ENCODE measurements at regions of chr12 and their contacts with region 1.

Region 1: GRCh38 chr12:26884765-26885576 is 52.0 kb upstream of the ITPR2 start:
- DNase-seq: peak; percentile 59 to 89 (median 82)
- ATAC-seq: peak; percentile 99
- H3K4me3 ChIP-seq: peak overlapping the region; percentile 18 to 21
- H3K4me3 Mint-ChIP-seq: peak overlapping the region; percentile 70
- H3K27ac ChIP-seq: no peak overlapping the region
- H3K27ac Mint-ChIP-seq: no peak overlapping the region
- H3K4me1 ChIP-seq: no peaks in the 10 kb centered on the region
- H3K4me1 Mint-ChIP-seq: peaks cover 8% of the 10 kb centered on the region
- H3K27me3 ChIP-seq: no peaks in the 10 kb centered on the region
- H3K27me3 Mint-ChIP-seq: peaks cover 6% of the 10 kb centered on the region
- CTCF ChIP-seq: peak; percentile 98

Region 2: DNA sequence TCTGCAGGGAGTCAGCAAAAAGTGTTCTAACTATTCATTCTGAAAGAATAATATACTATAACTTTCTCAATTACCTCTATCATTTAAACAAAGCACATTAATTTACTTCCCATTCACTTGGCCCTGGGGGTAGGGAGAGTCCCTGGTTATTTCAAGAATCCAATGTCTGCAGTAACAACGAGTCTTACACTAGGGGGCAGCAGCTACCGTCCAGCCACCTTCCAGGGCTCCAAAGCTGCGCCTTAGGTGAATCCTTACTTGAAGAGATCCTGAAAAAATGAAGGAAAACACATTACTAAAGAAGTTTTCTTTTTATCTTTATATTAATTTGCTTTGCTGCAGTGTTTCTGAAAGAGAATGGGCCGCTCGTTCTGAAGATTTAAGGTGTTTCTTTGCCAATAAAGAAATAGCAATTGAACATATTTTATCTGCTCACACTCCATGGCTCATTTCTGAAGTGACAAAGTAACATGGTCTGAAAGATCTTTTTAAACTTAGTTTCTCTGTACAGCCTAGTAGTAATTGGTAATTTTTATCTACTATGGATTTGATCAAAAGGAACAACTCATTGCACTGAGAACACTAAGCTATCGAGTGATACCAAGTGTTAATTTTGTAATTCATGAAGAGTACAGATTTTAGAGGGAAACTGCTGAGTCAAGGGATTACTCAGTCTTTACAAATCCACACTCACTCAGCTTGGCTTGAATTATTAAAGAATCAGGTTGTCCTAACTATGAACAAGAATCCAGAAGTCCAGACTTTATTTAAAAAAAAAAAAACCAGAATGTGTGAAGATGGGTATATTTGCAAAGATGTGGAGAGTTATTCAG is 787.7 kb before region 1 on chr12:
- CTCF ChIA-PET with region 1: no interaction called
- POLR2A ChIA-PET with region 1: no interaction called
- intact Hi-C with region 1: loop called (anchors 1 to 5 kb)
- DNase-seq: peak; percentile 16 to 73 (median 55)
- ATAC-seq: peak; percentile 81
- H3K4me3 ChIP-seq: no peak overlapping the region
- H3K4me3 Mint-ChIP-seq: no peak overlapping the region
- H3K27ac ChIP-seq: no peak overlapping the region
- H3K27ac Mint-ChIP-seq: no peak overlapping the region
- H3K4me1 ChIP-seq: no peaks in the 10 kb centered on the region
- H3K4me1 Mint-ChIP-seq: no peaks in the 10 kb centered on the region
- H3K27me3 ChIP-seq: no peaks in the 10 kb centered on the region
- H3K27me3 Mint-ChIP-seq: peaks cover 7% of the 10 kb centered on the region
- CTCF ChIP-seq: peak; percentile 90

Region 3: GRCh38 chr12:26396402-26396801 is 488.6 kb before region 1 on chr12:
- CTCF ChIA-PET with region 1: no interaction called
- POLR2A ChIA-PET with region 1: no interaction called
- intact Hi-C with region 1: no loop called
- DNase-seq: no peak
- ATAC-seq: no peak
- H3K4me3 ChIP-seq: no peak overlapping the region
- H3K4me3 Mint-ChIP-seq: no peak overlapping the region
- H3K27ac ChIP-seq: no peak overlapping the region
- H3K27ac Mint-ChIP-seq: no peak overlapping the region
- H3K4me1 ChIP-seq: no peaks in the 10 kb centered on the region
- H3K4me1 Mint-ChIP-seq: no peaks in the 10 kb centered on the region
- H3K27me3 ChIP-seq: no peaks in the 10 kb centered on the region
- H3K27me3 Mint-ChIP-seq: no peaks in the 10 kb centered on the region
- CTCF ChIP-seq: no peak

Region 4: GRCh38 chr12:26713885-26714383 is 171.0 kb before region 1 on chr12:
- CTCF ChIA-PET with region 1: no interaction called
- POLR2A ChIA-PET with region 1: no interaction called
- intact Hi-C with region 1: loop called in 1 of 2 experiments (anchors 10 kb)
- DNase-seq: no peak
- ATAC-seq: no peak
- H3K4me3 ChIP-seq: no peak overlapping the region
- H3K4me3 Mint-ChIP-seq: no peak overlapping the region
- H3K27ac ChIP-seq: no peak overlapping the region
- H3K27ac Mint-ChIP-seq: no peak overlapping the region
- H3K4me1 ChIP-seq: no peaks in the 10 kb centered on the region
- H3K4me1 Mint-ChIP-seq: no peaks in the 10 kb centered on the region
- H3K27me3 ChIP-seq: no peaks in the 10 kb centered on the region
- H3K27me3 Mint-ChIP-seq: no peaks in the 10 kb centered on the region
- CTCF ChIP-seq: no peak

Region 5: DNA sequence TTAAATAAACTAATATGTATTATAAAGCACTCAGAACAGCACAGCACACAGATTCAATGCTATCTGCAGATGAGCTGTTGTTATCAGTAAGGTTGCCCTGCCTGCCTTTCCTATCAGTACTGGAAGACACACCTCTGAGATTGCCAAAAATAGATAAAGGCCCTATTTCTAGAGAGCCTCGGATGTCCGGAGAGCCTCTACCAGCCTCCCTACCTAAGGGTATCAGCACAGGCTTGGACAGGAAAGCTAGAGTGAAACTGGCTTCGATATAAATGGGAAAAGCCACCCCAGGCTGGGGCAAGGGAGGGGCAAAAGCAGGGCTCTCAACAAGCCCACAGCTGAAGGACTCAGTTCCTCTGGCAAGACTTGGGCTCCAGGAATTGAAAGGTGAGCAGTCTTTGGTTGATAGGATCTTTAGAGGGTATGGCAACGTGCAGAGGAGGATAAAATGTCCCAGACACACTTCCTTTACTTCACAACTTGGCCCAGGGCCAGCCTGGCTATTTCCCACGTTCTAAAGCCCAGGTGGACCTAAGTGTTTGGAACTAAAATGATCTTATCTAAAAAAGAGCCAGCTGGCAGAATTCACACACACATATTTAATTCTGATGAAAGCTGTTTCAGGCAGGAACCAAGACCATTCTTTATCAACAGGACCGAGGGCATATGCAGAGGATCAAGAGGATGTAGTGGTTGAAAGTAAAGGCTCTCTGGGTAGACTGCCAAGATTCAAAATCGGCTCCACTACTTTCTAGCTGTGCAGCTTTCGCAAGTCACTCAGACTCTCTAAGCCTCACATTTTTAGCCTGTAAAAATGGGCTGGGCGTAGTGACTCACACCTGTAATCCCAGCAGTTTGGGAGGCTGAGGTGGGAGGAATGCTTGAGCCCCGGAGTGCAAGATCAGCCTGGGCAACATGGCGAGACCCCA is 14.2 kb before region 1 on chr12:
- CTCF ChIA-PET with region 1: interaction called, 17 read pairs
- POLR2A ChIA-PET with region 1: interaction called, 4 read pairs
- intact Hi-C with region 1: no loop called
- DNase-seq: no peak
- ATAC-seq: no peak
- H3K4me3 ChIP-seq: no peak overlapping the region
- H3K4me3 Mint-ChIP-seq: no peak overlapping the region
- H3K27ac ChIP-seq: no peak overlapping the region
- H3K27ac Mint-ChIP-seq: no peak overlapping the region
- H3K4me1 ChIP-seq: peaks cover 5% of the 10 kb centered on the region
- H3K4me1 Mint-ChIP-seq: peaks cover 14% of the 10 kb centered on the region
- H3K27me3 ChIP-seq: no peaks in the 10 kb centered on the region
- H3K27me3 Mint-ChIP-seq: peaks cover 3% of the 10 kb centered on the region
- CTCF ChIP-seq: no peak

Region 6: DNA sequence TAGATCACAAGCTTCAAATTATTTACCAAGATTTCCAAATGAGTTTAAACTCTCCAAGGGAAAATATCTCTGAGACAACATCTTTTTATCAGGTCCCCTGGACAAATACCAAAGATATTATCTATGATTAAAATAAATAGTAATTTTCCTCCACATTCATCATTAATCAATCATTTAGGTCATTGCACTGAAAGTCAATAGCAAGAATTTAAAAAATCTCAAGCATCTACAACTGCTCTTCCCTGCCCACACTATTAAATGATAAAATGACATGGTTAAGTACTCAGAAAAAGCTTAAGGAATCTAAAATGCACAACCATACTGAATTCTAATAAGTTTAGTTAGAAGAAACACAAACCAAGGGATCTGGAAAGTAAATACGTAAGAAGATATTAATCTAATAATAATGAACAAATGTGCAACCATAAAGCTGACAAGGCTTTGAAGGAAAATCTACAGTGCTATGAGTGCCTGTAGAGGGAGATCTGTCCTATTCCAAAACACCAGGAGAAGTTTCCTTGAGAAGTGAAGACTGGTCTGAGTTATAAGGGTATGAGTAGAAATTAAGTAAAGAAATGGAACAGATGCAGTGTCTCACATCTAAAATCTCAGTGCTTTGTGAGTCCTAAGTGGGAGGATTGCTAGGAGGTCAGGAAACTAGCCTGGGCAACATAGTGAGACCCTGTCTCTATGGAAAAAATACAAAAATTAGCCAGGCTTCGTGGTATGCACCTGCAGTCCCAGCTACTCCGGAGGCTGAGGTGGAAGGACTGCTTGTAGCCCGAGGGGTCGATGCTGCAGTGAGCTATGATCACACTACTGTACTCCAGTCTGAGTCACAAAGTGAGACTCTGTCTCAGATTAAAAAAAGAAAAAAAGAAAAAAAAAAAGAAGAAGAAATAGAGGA is 33.6 kb after region 1 on chr12:
- CTCF ChIA-PET with region 1: interaction called, 16 read pairs
- POLR2A ChIA-PET with region 1: no interaction called
- intact Hi-C with region 1: no loop called
- DNase-seq: no peak
- ATAC-seq: no peak
- H3K4me3 ChIP-seq: no peak overlapping the region
- H3K4me3 Mint-ChIP-seq: no peak overlapping the region
- H3K27ac ChIP-seq: no peak overlapping the region
- H3K27ac Mint-ChIP-seq: no peak overlapping the region
- H3K4me1 ChIP-seq: no peaks in the 10 kb centered on the region
- H3K4me1 Mint-ChIP-seq: no peaks in the 10 kb centered on the region
- H3K27me3 ChIP-seq: no peaks in the 10 kb centered on the region
- H3K27me3 Mint-ChIP-seq: no peaks in the 10 kb centered on the region
- CTCF ChIP-seq: no peak

Measured in CD8-positive, alpha-beta T cell (primary cell).